ENCODE measurements at regions of chr14 and their contacts with region 1.

Region 1: DNA sequence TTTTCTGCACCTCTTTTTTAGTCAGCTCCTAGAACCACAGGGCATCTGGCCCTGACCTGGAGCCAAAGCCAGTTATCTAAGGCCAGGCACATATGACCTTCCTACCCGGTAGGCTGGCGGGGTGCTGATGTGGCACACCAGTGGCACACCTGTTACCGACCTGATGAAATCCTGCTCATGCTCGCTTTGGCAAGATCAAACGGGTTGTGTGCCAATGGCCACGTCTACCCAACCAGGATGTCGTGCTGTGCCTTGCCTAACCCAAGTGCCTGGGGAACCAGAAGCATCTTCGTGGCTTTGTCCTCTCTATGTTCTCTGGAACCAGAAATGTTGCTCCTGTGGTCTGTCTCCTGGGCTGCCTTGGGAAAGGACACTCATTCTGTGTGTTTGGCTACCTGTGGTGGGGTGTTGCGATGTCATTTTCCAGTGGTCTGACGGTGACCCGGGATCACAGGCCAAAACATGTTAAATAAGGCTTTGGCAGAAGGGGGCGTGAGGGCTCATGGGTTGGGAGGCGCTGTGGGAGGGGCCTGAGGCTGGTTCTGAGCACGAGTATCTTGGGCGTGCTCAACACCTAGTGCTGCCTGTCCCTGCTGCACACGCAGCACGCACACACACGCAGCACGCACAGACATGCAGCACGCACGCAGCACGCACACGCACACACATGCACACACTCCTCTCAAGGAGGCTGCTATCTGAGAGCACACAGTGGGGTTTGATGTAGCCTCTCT is 27.9 kb downstream of the CCNK start:
- DNase-seq: peak; percentile 17
- H3K4me3 ChIP-seq: no peak overlapping the region
- H3K27ac ChIP-seq: no peak overlapping the region
- H3K4me1 ChIP-seq: no peaks in the 10 kb centered on the region
- H3K27me3 ChIP-seq: no peaks in the 10 kb centered on the region
- CTCF ChIP-seq: no peak

Region 2: DNA sequence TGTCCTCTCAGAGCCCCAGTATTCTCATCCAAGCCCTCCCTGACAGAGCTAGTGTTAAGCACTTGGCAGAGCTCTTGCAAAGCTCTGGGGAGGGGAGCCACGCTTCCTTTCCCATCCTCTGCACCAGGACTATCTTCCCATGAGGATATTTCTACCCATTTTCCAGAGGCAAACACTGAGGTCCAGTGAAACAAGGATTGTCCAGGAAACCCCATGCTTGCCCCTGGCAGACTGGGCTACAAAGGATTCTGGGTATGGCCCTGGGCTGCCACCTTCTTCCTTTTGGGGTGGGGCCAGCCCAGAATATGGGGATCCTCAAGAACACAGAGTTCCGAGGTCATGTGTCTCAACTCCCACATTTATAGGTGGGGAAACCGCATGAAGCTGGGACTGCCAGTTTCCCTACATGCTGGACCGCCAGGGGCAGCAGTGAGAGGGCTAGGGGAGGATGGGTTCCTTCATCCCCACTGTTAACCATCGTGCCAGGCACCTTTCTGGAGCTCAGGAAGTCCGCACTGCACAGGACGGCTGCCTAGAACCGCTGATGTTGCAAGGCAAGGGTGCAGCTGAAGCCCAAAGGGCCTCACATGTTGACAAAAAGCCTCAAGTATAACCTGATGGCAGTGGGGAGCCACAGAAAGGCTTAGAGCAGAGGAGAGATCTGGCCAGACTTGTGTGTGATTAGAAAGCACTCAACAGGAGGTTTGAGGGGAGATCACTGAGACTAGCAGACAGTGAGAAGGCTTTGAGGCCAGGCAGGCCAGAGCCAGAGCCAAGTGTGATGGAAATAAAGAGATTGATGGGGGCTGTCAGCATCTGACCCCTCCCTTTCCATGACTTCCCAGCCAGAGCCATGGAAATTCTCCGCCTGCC is 100.4 kb after region 1 on chr14:
- CTCF ChIA-PET with region 1: no interaction called
- dilution Hi-C with region 1: loop called (anchors 5 kb)
- in situ Hi-C with region 1: no loop called
- intact Hi-C with region 1: no loop called
- DNase-seq: no peak
- H3K4me3 ChIP-seq: no peak overlapping the region
- H3K27ac ChIP-seq: no peak overlapping the region
- H3K4me1 ChIP-seq: peaks cover 29% of the 10 kb centered on the region
- H3K27me3 ChIP-seq: no peaks in the 10 kb centered on the region
- CTCF ChIP-seq: no peak

Region 3: GRCh38 chr14:99644723-99645550 is 135.9 kb after region 1 on chr14 and contains the start of gene HHIPL1:
- CTCF ChIA-PET with region 1: no interaction called
- dilution Hi-C with region 1: loop called (anchors 10 kb)
- in situ Hi-C with region 1: no loop called
- intact Hi-C with region 1: no loop called
- DNase-seq: no peak
- H3K4me3 ChIP-seq: peak within 1 kb of the TSS in 2 of 3 experiments; percentile 7 to 45
- H3K27ac ChIP-seq: no peak within 1 kb of the TSS
- H3K4me1 ChIP-seq: peaks cover 17% of the 10 kb centered on the region
- H3K27me3 ChIP-seq: peaks cover 3% of the 10 kb centered on the region
- CTCF ChIP-seq: no peak
- total RNA-seq, gene HHIPL1: 0.38 to 0.83 TPM

Region 4: GRCh38 chr14:99729991-99730868 is 221.2 kb after region 1 on chr14:
- CTCF ChIA-PET with region 1: no interaction called
- dilution Hi-C with region 1: no loop called
- in situ Hi-C with region 1: no loop called
- intact Hi-C with region 1: no loop called
- DNase-seq: no peak
- H3K4me3 ChIP-seq: no peak overlapping the region
- H3K27ac ChIP-seq: no peak overlapping the region
- H3K4me1 ChIP-seq: peaks cover 6% of the 10 kb centered on the region
- H3K27me3 ChIP-seq: peaks cover 5% of the 10 kb centered on the region
- CTCF ChIP-seq: peak; percentile 70 to 75

Measured in mammary epithelial cell (primary cell).